ENCODE measurements at regions of chr11 and their contacts with region 1.

Region 1: GRCh38 chr11:11028017-11028692 is 170.3 kb upstream of the ZBED5 start:
- DNase-seq: peak; percentile 54 to 87 (median 76)
- ATAC-seq: peak; percentile 98
- H3K4me3 ChIP-seq: no peak overlapping the region
- H3K4me3 Mint-ChIP-seq: no peak overlapping the region
- H3K27ac ChIP-seq: no peak overlapping the region
- H3K27ac Mint-ChIP-seq: no peak overlapping the region
- H3K4me1 ChIP-seq: no peaks in the 10 kb centered on the region
- H3K4me1 Mint-ChIP-seq: no peaks in the 10 kb centered on the region
- H3K27me3 ChIP-seq: no peaks in the 10 kb centered on the region
- H3K27me3 Mint-ChIP-seq: peaks cover 3% of the 10 kb centered on the region
- CTCF ChIP-seq: peak; percentile 81

Region 2: GRCh38 chr11:10803676-10804075 is 224.5 kb before region 1 on chr11:
- CTCF ChIA-PET with region 1: interaction called, 10 read pairs
- POLR2A ChIA-PET with region 1: no interaction called
- intact Hi-C with region 1: no loop called
- DNase-seq: no peak
- ATAC-seq: no peak
- H3K4me3 ChIP-seq: no peak overlapping the region
- H3K4me3 Mint-ChIP-seq: no peak overlapping the region
- H3K27ac ChIP-seq: no peak overlapping the region
- H3K27ac Mint-ChIP-seq: no peak overlapping the region
- H3K4me1 ChIP-seq: peaks cover 76% of the 10 kb centered on the region
- H3K4me1 Mint-ChIP-seq: peaks cover 82% of the 10 kb centered on the region
- H3K27me3 ChIP-seq: no peaks in the 10 kb centered on the region
- H3K27me3 Mint-ChIP-seq: no peaks in the 10 kb centered on the region
- CTCF ChIP-seq: no peak

Region 3: GRCh38 chr11:11016068-11016467 is 12.1 kb before region 1 on chr11:
- CTCF ChIA-PET with region 1: interaction called, 13 read pairs
- POLR2A ChIA-PET with region 1: no interaction called
- intact Hi-C with region 1: no loop called
- DNase-seq: no peak
- ATAC-seq: peak; percentile 46
- H3K4me3 ChIP-seq: no peak overlapping the region
- H3K4me3 Mint-ChIP-seq: no peak overlapping the region
- H3K27ac ChIP-seq: no peak overlapping the region
- H3K27ac Mint-ChIP-seq: no peak overlapping the region
- H3K4me1 ChIP-seq: no peaks in the 10 kb centered on the region
- H3K4me1 Mint-ChIP-seq: no peaks in the 10 kb centered on the region
- H3K27me3 ChIP-seq: no peaks in the 10 kb centered on the region
- H3K27me3 Mint-ChIP-seq: peaks cover 6% of the 10 kb centered on the region
- CTCF ChIP-seq: no peak

Region 4: GRCh38 chr11:11148104-11148509 is 120.0 kb after region 1 on chr11:
- CTCF ChIA-PET with region 1: interaction called, 11 read pairs
- POLR2A ChIA-PET with region 1: interaction called, 3 read pairs
- intact Hi-C with region 1: no loop called
- DNase-seq: peak in 4 of 9 experiments; percentile 26 to 52 (median 38)
- ATAC-seq: no peak
- H3K4me3 ChIP-seq: no peak overlapping the region
- H3K4me3 Mint-ChIP-seq: no peak overlapping the region
- H3K27ac ChIP-seq: no peak overlapping the region
- H3K27ac Mint-ChIP-seq: peak overlapping the region; percentile 79
- H3K4me1 ChIP-seq: peaks cover 42% of the 10 kb centered on the region
- H3K4me1 Mint-ChIP-seq: peaks cover 42% of the 10 kb centered on the region
- H3K27me3 ChIP-seq: no peaks in the 10 kb centered on the region
- H3K27me3 Mint-ChIP-seq: no peaks in the 10 kb centered on the region
- CTCF ChIP-seq: no peak

Region 5: DNA sequence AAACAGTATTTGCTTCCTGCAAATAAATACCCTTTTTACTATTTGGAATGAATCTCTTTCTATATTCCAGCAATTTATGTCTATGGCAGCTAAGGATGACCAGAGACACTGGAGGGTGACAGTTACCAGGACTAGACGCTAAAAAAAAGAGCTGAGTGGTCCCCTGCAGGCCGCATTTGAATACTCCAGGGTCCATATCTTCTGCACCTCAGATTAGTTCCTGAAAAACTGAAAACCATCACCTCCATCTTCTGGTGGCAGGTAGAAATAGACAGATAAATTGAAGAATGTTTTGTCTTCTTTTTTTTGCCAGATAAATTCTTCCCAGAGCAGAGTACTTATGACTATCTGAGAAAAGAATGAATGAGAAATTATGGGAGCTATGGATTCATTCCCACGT is 179.3 kb after region 1 on chr11:
- CTCF ChIA-PET with region 1: interaction called, 3 read pairs
- POLR2A ChIA-PET with region 1: no interaction called
- intact Hi-C with region 1: loop called in 1 of 2 experiments (anchors 1 kb)
- DNase-seq: peak in 2 of 9 experiments; percentile 26 to 27
- ATAC-seq: no peak
- H3K4me3 ChIP-seq: no peak overlapping the region
- H3K4me3 Mint-ChIP-seq: no peak overlapping the region
- H3K27ac ChIP-seq: no peak overlapping the region
- H3K27ac Mint-ChIP-seq: no peak overlapping the region
- H3K4me1 ChIP-seq: no peaks in the 10 kb centered on the region
- H3K4me1 Mint-ChIP-seq: no peaks in the 10 kb centered on the region
- H3K27me3 ChIP-seq: peaks cover 3% of the 10 kb centered on the region in 2 experiments
- H3K27me3 Mint-ChIP-seq: peaks cover 23% of the 10 kb centered on the region
- CTCF ChIP-seq: no peak

Region 6: GRCh38 chr11:11787305-11788062 is 759.3 kb after region 1 on chr11:
- CTCF ChIA-PET with region 1: interaction called, 67 read pairs
- POLR2A ChIA-PET with region 1: no interaction called
- intact Hi-C with region 1: loop called (anchors 1 kb)
- DNase-seq: peak; percentile 33 to 79 (median 71)
- ATAC-seq: peak; percentile 82
- H3K4me3 ChIP-seq: no peak overlapping the region
- H3K4me3 Mint-ChIP-seq: no peak overlapping the region
- H3K27ac ChIP-seq: no peak overlapping the region
- H3K27ac Mint-ChIP-seq: no peak overlapping the region
- H3K4me1 ChIP-seq: no peaks in the 10 kb centered on the region
- H3K4me1 Mint-ChIP-seq: no peaks in the 10 kb centered on the region
- H3K27me3 ChIP-seq: no peaks in the 10 kb centered on the region
- H3K27me3 Mint-ChIP-seq: peaks cover 7% of the 10 kb centered on the region
- CTCF ChIP-seq: peak; percentile 83

Measured in CD8-positive, alpha-beta T cell (primary cell).